HEK293 (cell line): ENCODE measurements at regions of chr1 and their contacts with region 1.

Region 1: GRCh38 chr1:6218375-6219164 is 12.7 kb downstream of the RNF207 start:
- H3K4me3 ChIP-seq: no peak overlapping the region
- H3K27ac ChIP-seq: no peak overlapping the region
- H3K4me1 ChIP-seq: no peaks in the 10 kb centered on the region
- CTCF ChIP-seq: no peak

Region 2: DNA sequence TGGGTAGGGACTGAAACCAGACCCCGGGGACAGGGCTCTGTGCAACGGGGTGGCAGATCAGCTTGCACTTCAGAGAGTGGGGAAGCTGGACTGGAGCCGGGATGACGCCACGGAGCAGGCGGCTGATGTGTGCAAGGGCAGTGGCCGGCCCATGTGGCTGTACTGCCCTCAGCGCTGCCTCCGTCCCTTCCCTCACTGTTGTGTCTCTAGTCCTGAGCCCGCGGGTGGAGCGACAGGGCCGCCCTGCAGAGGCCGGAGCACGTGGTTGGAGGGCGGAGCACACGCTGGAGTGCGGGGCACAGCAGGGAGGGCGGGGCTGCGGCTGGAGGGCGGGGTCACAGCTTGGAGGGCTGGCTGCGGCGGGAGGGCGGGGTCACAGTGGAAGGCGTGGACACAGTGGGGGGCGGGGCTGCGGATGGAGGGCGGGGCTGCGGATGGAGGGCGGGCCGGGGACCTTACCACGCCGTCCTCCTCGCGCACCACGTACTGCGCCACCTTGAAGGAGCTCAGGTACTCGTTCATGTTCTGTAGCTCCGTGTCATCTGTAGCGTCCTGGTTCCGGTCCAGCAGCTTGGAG is 90.9 kb before region 1 on chr1:
- CTCF ChIA-PET with region 1: no interaction called
- POLR2A ChIA-PET with region 1: no interaction called
- H3K4me3 ChIP-seq: no peak overlapping the region
- H3K27ac ChIP-seq: no peak overlapping the region
- H3K4me1 ChIP-seq: no peaks in the 10 kb centered on the region
- CTCF ChIP-seq: no peak

Region 3: GRCh38 chr1:6199298-6200187 is 19.0 kb before region 1 on chr1 and contains the start of gene RPL22:
- CTCF ChIA-PET with region 1: interaction called, 17 read pairs
- POLR2A ChIA-PET with region 1: interaction called, 5 read pairs
- H3K4me3 ChIP-seq: peak within 1 kb of the TSS; percentile 99
- H3K27ac ChIP-seq: peak within 1 kb of the TSS; percentile 76
- H3K4me1 ChIP-seq: peaks cover 4% of the 10 kb centered on the region; the same call in 1 of the 2 replicates
- CTCF ChIP-seq: no peak